Activated B cell treated with CpG ODN at 0.5 μM for 24 hours (primary cell): ENCODE measurements at regions of chr13 and their contacts with region 1.

Region 1: GRCh38 chr13:43041369-43041921 is 18.1 kb downstream of the DNAJC15 start:
- DNase-seq: no peak
- ATAC-seq: peak; percentile 22
- H3K4me3 Mint-ChIP-seq: peak overlapping the region; percentile 39
- H3K27ac Mint-ChIP-seq: peak overlapping the region; percentile 79
- H3K4me1 Mint-ChIP-seq: peaks cover 77% of the 10 kb centered on the region
- H3K27me3 Mint-ChIP-seq: no peaks in the 10 kb centered on the region
- CTCF ChIP-seq: no peak

Region 2: GRCh38 chr13:42977219-42977659 is 64.2 kb before region 1 on chr13:
- CTCF ChIA-PET with region 1: no interaction called
- POLR2A ChIA-PET with region 1: interaction called, 3 read pairs
- intact Hi-C with region 1: loop called (anchors 1 kb)
- DNase-seq: no peak
- ATAC-seq: peak; percentile 97
- H3K4me3 Mint-ChIP-seq: peak overlapping the region; percentile 7
- H3K27ac Mint-ChIP-seq: peak overlapping the region; percentile 42
- H3K4me1 Mint-ChIP-seq: peaks cover 25% of the 10 kb centered on the region
- H3K27me3 Mint-ChIP-seq: no peaks in the 10 kb centered on the region
- CTCF ChIP-seq: no peak

Region 3: GRCh38 chr13:42991892-42992763 is 49.3 kb before region 1 on chr13 and contains the start of gene EPSTI1:
- CTCF ChIA-PET with region 1: no interaction called
- POLR2A ChIA-PET with region 1: interaction called, 17 read pairs
- intact Hi-C with region 1: loop called (anchors 1 kb)
- DNase-seq: peak; percentile 69
- ATAC-seq: peak; percentile 85
- H3K4me3 Mint-ChIP-seq: peak within 1 kb of the TSS; percentile 92
- H3K27ac Mint-ChIP-seq: peak within 1 kb of the TSS; percentile 99
- H3K4me1 Mint-ChIP-seq: peaks cover 58% of the 10 kb centered on the region
- H3K27me3 Mint-ChIP-seq: no peaks in the 10 kb centered on the region
- CTCF ChIP-seq: no peak
- total RNA-seq, gene EPSTI1: 30.6 and 32.8 TPM in 2 replicates

Region 4: DNA sequence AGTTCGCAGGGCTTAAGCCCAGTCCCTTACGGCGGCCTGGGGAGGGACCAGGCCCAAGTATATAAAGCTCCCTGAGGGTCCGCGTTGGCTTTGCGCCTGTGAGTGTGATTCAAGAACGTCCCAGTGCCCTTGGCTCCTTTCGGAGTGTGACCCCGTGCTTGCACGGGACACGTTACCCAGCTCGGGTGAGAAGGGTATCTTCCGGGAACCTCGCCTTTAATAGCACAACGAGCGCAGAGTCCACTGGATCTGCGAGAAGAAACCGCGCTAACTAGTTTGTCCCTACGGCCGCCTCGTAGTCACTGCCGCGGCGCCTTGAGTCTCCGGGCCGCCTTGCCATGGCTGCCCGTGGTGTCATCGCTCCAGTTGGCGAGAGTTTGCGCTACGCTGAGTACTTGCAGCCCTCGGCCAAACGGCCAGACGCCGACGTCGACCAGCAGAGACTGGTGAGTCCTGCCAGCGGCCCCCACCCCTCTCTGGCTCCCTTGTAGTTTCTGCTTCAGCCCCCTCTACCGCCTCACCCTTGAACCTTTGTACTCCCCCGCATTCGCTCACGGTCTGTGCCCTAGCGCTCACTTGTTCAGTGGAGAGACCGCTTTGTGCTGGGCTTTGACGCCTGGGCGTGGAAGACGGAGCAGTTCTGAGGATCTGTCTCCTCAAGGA is 18.0 kb before region 1 on chr13 and contains the start of gene DNAJC15:
- CTCF ChIA-PET with region 1: interaction called, 3 read pairs
- POLR2A ChIA-PET with region 1: interaction called, 5 read pairs
- intact Hi-C with region 1: loop called (anchors 1 kb)
- DNase-seq: peak; percentile 81
- ATAC-seq: peak; percentile 85
- H3K4me3 Mint-ChIP-seq: peak within 1 kb of the TSS; percentile 94
- H3K27ac Mint-ChIP-seq: peak within 1 kb of the TSS; percentile 97
- H3K4me1 Mint-ChIP-seq: peaks cover 47% of the 10 kb centered on the region
- H3K27me3 Mint-ChIP-seq: no peaks in the 10 kb centered on the region
- CTCF ChIP-seq: no peak
- total RNA-seq, gene DNAJC15: 19.1 and 19.3 TPM in 2 replicates

Region 5: DNA sequence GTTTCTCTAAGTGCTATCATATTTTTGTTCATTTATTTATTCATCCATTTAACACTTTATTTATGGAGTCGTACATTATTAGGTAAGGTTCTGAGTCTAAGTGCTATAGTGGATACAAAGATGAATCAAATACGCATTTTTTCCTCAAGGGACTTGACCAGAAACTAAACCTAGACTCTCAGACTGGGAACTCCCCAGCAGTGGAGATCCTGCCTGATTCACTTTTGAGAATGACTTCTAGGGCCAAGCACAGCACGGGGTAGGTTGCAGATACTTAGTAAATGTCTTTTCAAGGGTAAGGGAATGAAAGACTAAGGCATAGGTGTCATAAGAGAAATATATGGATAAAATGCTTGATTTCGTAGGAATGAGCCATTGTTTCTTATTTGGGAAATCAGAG is 10.9 kb before region 1 on chr13:
- CTCF ChIA-PET with region 1: no interaction called
- POLR2A ChIA-PET with region 1: interaction called, 11 read pairs
- intact Hi-C with region 1: loop called (anchors 1 kb)
- DNase-seq: no peak
- ATAC-seq: peak; percentile 96
- H3K4me3 Mint-ChIP-seq: peak overlapping the region; percentile 19
- H3K27ac Mint-ChIP-seq: peak overlapping the region; percentile 25
- H3K4me1 Mint-ChIP-seq: peaks cover 65% of the 10 kb centered on the region
- H3K27me3 Mint-ChIP-seq: no peaks in the 10 kb centered on the region
- CTCF ChIP-seq: no peak

Region 6: DNA sequence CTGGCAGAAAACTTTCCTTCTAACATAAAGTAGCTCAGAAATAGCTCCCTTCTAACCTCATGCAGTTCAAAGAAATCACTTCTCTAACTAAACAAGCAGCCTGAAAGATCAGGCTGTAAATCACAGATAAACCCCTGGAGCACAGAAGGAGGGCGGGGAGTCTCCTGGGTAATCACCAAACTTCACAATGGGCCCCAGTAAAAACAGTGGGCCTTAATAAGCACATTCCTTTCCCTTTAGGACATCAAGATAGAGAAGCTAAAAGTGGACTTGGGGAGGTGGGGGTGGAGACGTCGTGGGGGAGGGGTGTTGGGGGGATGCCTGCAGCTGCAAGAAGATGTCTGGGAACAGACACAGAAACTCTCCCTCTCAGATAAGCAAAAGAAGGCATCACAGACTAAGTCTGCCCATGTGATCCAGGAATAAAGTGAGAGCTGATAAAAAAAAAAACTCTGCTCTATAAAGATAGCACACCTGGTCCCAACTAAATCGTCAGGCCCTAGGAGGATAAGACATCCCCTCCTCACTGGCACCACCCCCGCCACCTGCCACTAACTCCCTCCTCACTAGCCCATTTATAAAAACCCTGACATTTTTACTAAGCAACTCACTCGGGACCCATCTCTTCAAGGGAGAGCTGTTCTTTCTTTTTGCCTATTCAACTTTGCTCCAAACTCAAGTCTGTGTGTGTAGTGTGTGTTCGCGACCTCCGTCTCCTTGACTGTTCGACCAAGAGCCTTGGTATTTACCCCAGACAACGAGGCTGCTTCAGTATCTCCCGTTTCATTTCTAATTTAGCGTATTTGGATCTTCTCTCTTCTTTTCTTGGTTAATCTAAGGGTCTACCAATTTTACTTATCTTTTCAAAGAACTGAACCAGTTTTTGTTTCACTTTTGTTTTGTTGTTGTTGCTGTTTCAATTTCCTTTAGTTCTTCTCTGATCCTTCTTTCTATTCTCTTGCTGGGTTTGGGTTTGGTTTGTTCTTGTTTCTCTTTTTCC is 13.7 kb after region 1 on chr13:
- CTCF ChIA-PET with region 1: no interaction called
- POLR2A ChIA-PET with region 1: interaction called, 8 read pairs
- intact Hi-C with region 1: loop called (anchors 1 kb)
- DNase-seq: no peak
- ATAC-seq: peak; percentile 53
- H3K4me3 Mint-ChIP-seq: no peak overlapping the region
- H3K27ac Mint-ChIP-seq: no peak overlapping the region
- H3K4me1 Mint-ChIP-seq: peaks cover 47% of the 10 kb centered on the region
- H3K27me3 Mint-ChIP-seq: no peaks in the 10 kb centered on the region
- CTCF ChIP-seq: no peak

Region 7: GRCh38 chr13:43085545-43085944 is 44.1 kb after region 1 on chr13:
- CTCF ChIA-PET with region 1: interaction called, 4 read pairs
- POLR2A ChIA-PET with region 1: no interaction called
- intact Hi-C with region 1: loop called (anchors 5 kb)
- DNase-seq: no peak
- ATAC-seq: peak; percentile 28
- H3K4me3 Mint-ChIP-seq: no peak overlapping the region
- H3K27ac Mint-ChIP-seq: no peak overlapping the region
- H3K4me1 Mint-ChIP-seq: peaks cover 23% of the 10 kb centered on the region
- H3K27me3 Mint-ChIP-seq: no peaks in the 10 kb centered on the region
- CTCF ChIP-seq: no peak